ENCODE measurements at regions of chr11 and their contacts with region 1.

Region 1: GRCh38 chr11:47355283-47356128 is 3.0 kb upstream of the MYBPC3 start:
- DNase-seq: peak; percentile 89

Region 2: DNA sequence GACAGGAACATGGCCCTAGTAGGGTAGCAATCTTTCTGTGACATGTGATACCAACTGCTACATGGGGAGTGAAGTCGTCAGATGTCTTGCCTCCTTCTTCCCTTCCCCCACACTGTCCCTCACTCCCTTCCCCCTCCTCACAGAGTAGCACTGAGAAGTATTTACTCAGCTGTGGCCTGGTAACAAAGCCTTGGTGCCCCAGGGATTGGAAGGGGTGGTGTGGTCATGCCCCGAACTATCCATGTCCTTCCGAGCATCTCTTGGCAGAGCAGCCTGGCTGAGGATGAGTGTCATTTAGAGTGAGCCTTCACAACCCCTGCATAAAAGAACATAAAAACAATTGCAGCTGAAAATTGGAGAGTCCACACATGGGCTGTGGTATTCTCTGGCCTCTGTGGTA is 225.0 kb before region 1 on chr11:
- CTCF ChIA-PET with region 1: interaction called, 10 read pairs
- POLR2A ChIA-PET with region 1: no interaction called
- DNase-seq: no peak

Region 3: GRCh38 chr11:47186076-47186936 is 169.2 kb before region 1 on chr11 and contains the start of gene PACSIN3:
- CTCF ChIA-PET with region 1: interaction called, 12 read pairs
- POLR2A ChIA-PET with region 1: interaction called, 3 read pairs
- DNase-seq: peak; percentile 72

Region 4: GRCh38 chr11:47259178-47259977 is 96.1 kb before region 1 on chr11:
- CTCF ChIA-PET with region 1: interaction called, 17 read pairs
- POLR2A ChIA-PET with region 1: no interaction called
- DNase-seq: peak; percentile 70

Region 5: DNA sequence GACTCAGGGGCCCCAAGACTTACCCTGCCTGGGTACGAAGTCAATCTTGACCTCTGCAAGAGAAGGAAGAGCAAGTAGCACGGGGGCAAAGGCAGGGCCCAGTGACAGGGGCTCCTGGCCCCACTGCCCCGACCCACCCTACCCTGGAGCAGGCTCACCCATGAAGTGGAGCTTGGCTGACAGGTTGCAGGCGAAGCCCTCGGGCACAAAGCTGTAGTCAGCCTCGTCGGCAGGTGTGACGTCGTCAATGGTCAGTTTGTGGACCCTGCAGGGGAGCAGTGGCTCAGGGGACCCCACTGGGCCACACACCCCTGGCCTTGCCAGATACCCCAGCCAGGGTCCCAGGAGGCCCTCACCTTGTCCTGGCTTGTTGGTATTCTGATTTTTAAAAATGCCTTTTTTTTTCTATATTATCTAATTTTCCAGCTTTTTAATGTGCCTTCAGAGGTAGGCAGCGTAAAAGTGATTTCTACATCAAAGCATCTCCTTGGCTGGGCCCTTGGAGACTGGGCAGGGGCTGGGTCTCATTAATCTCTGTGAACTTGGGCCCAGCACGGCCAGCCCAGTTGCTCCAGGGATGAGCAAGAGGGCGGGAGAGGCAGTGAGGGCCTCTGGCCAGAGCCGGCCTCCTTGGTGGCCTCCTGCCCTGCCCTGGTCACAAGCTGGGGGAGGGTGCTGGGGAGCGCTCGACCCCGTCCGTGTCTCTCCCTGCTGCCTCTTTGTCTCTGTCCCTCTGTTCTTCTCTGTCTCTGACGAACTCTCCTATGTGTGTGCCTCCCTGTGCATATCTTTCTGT is 14.3 kb before region 1 on chr11:
- CTCF ChIA-PET with region 1: interaction called, 22 read pairs
- POLR2A ChIA-PET with region 1: no interaction called
- DNase-seq: no peak